Motor neuron (in vitro differentiated cells): ENCODE measurements at regions of chr17 and their contacts with region 1.

Region 1: GRCh38 chr17:59914274-59914854 is 21.4 kb downstream of the RPS6KB1 start:
- ATAC-seq: peak in 4 of 8 experiments; percentile 30 to 44 (median 40)
- H3K4me3 ChIP-seq: no peak overlapping the region
- H3K27ac ChIP-seq: no peak overlapping the region
- H3K4me1 ChIP-seq: no peaks in the 10 kb centered on the region

Region 2: DNA sequence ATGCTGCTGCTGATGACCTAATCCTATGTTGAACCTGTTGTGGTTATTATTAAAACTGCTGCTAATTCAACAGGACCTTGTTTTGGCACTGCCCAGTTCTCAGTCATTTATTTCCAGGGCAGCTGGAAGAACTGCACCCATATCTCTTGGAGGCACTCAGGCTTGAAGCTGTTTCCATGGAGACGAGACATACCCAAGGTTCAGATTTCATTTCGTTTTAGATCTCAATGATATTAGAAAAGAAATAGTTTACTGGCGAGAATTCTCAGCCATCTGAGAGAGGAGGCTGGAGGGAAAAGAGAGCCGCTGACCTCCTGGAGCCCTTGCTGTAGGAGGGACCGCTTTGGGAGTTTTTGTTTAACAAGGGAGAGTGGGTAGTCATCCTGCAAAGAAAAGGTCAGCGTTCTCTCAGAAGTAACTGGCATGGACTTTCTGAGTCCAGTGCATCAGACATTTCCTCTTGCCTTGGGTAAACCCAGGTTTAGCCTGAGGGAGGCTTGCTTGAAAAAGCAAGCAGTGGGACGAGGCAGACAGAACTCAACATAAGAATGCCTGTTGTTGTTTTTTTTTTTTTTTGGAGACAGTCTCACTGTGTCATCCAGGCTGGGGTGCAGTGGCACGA is 507.4 kb before region 1 on chr17:
- in situ Hi-C with region 1: no loop called
- ATAC-seq: peak; percentile 44 to 74 (median 62)
- H3K4me3 ChIP-seq: no peak overlapping the region
- H3K27ac ChIP-seq: no peak overlapping the region
- H3K4me1 ChIP-seq: peaks cover 16 to 18% of the 10 kb centered on the region in 2 donors

Region 3: DNA sequence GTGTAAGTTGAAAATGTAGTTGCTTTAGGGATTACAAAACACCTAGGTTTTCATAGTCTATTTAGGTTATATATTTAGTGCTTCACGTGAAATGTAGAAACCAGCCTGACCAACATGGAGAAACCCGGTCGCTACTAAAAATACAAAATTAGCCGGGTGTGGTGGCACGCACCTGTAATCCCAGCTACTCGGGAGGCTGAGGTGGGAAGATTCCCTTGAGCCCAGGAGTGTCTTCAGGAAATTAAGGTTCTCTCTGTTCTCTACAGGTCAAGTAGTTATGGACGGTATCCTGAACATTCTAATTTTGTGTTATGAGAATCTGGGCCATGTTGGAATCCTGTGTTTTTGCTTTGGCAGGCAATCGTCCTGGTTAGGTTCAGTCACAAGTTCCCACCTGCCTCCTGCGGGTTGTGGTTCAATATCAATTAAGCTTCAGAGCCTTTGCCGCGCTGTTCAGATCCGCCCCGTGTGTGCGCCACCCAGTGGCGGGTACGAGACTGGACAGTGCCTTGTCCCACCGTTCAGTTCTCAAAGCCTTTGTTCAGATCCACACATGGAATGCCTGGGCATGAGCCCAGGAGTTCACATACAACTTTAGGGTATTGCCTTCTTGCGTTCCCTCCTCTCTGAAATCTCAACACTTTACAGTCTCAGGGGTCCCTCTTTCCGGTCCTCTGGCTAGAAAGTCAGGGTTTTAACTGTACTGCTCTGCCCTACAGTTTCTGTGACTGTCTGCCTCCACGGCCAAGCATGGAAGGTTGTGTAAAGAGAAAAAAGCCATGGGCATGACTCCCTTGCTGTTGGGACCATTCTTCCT is 122.6 kb after region 1 on chr17:
- in situ Hi-C with region 1: loop called in 2 of 9 experiments (anchors 25 kb)
- ATAC-seq: peak; percentile 52 to 99 (median 82)
- H3K4me3 ChIP-seq: no peak overlapping the region
- H3K27ac ChIP-seq: no peak overlapping the region
- H3K4me1 ChIP-seq: no peaks in the 10 kb centered on the region

Region 4: GRCh38 chr17:60065136-60065535 is 150.8 kb after region 1 on chr17:
- in situ Hi-C with region 1: loop called in 4 of 9 experiments (anchors 25 kb)
- ATAC-seq: no peak
- H3K4me3 ChIP-seq: no peak overlapping the region
- H3K27ac ChIP-seq: no peak overlapping the region
- H3K4me1 ChIP-seq: no peaks in the 10 kb centered on the region